Naive thymus-derived CD4-positive, alpha-beta T cell (primary cell): ENCODE measurements at regions of chr1 and their contacts with region 1.

Region 1: DNA sequence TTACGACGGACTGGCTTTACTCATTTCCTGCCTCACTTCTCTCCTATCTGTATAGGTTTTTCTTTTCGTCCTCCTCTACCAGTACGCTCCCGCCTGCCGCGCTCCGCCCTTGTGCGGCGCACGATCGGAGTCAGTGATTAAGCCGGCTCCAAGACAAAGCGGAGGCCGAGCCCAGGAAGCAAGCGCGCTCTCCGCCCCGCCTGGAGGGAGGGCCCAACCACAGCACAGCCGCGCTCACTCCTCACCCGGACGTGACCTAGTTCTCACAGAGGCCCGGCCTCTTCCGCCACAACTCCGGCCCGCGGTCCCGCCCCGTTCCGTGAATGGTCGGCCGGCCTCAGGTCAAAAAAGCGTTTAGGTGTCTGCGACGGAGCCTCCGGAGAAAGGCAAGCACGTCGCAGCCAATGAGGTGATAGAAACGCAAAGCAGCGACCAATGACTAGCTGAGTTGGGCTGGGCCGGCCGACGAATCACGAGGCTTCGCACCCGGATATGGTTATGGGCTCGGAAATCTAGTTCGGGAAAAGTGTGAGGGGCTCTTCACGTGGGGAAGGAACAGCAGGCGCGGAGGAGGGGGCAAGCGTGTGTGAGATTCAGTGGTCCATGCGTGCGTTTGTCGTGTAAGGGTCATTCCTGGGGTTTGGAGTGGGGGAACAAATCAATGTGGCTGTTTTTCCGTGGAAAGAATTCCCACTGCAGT is at the start of gene METTL13:
- DNase-seq: peak; percentile 89 to 100 (median 99)
- ATAC-seq: peak; percentile 95
- H3K4me3 ChIP-seq: peak within 1 kb of the TSS; percentile 95
- H3K4me3 Mint-ChIP-seq: peak within 1 kb of the TSS; percentile 90 to 99 (median 94)
- H3K27ac ChIP-seq: peak within 1 kb of the TSS; percentile 74
- H3K27ac Mint-ChIP-seq: peak within 1 kb of the TSS; percentile 93 to 99 (median 96)
- H3K4me1 ChIP-seq: peaks cover 20 to 41% of the 10 kb centered on the region in 2 donors
- H3K4me1 Mint-ChIP-seq: peaks cover 28 to 65% (median 58%) of the 10 kb centered on the region in 7 donors
- H3K27me3 ChIP-seq: no peaks in the 10 kb centered on the region
- H3K27me3 Mint-ChIP-seq: no peaks in the 10 kb centered on the region
- total RNA-seq, gene METTL13: 15.6 to 50.7 (median 34.5) TPM

Region 2: GRCh38 chr1:170074250-170075157 is 1706.8 kb before region 1 on chr1 and contains the start of gene KIFAP3:
- CTCF ChIA-PET with region 1: no interaction called
- POLR2A ChIA-PET with region 1: no interaction called
- intact Hi-C with region 1: loop called in 1 of 2 experiments (anchors 1 kb)
- DNase-seq: peak; percentile 84 to 94 (median 92)
- ATAC-seq: peak; percentile 96
- H3K4me3 ChIP-seq: peak within 1 kb of the TSS; percentile 76
- H3K4me3 Mint-ChIP-seq: peak within 1 kb of the TSS; percentile 89 to 99 (median 96)
- H3K27ac ChIP-seq: peak within 1 kb of the TSS; percentile 90
- H3K27ac Mint-ChIP-seq: peak within 1 kb of the TSS; percentile 83 to 98 (median 94)
- H3K4me1 ChIP-seq: peaks cover 15 to 37% of the 10 kb centered on the region in 2 donors
- H3K4me1 Mint-ChIP-seq: peaks cover 34 to 65% (median 57%) of the 10 kb centered on the region in 7 donors
- H3K27me3 ChIP-seq: no peaks in the 10 kb centered on the region
- H3K27me3 Mint-ChIP-seq: peaks cover 0 to 3% (median 0%) of the 10 kb centered on the region in 5 donors
- total RNA-seq, gene KIFAP3: 12.8 to 23.8 (median 20.1) TPM

Region 3: GRCh38 chr1:171654942-171655745 is 126.2 kb before region 1 on chr1:
- CTCF ChIA-PET with region 1: no interaction called
- POLR2A ChIA-PET with region 1: interaction called, 5 read pairs
- intact Hi-C with region 1: loop called (anchors 5 kb)
- DNase-seq: peak; percentile 24 to 76 (median 38)
- ATAC-seq: peak; percentile 78
- H3K4me3 ChIP-seq: peak overlapping the region; percentile 39
- H3K4me3 Mint-ChIP-seq: peak overlapping the region in 8 of 10 donors; percentile 3 to 72 (median 52)
- H3K27ac ChIP-seq: no peak overlapping the region
- H3K27ac Mint-ChIP-seq: peak overlapping the region in 1 of 9 donors; percentile 33
- H3K4me1 ChIP-seq: peaks cover 3 to 5% of the 10 kb centered on the region in 2 donors
- H3K4me1 Mint-ChIP-seq: peaks cover 9 to 12% (median 10%) of the 10 kb centered on the region in 7 donors
- H3K27me3 ChIP-seq: no peaks in the 10 kb centered on the region
- H3K27me3 Mint-ChIP-seq: peaks cover 0 to 34% (median 11%) of the 10 kb centered on the region in 5 donors

Region 4: DNA sequence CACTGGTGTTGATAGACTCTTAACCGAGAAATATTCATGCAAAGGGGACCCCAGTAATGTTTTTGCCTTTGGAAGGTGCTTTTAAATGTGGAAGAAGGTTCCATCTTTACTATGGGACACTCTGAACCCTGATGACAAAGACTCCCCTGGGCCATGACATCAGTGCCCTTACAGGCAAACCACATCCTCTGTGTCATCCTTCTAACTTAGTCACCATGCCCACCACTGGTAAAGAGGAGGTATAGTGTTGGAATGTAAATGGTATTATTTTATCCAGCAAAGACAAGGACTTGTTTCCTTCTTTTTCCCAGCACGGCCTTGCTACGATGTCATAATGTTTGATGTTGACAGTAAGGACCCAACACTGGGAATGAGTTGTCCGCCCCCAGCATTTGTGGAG is 12.8 kb after region 1 on chr1:
- CTCF ChIA-PET with region 1: no interaction called
- POLR2A ChIA-PET with region 1: interaction called, 4 read pairs
- intact Hi-C with region 1: loop called (anchors 1 to 2 kb)
- DNase-seq: peak in 2 of 9 donors; percentile 5 to 60
- ATAC-seq: peak; percentile 79
- H3K4me3 ChIP-seq: no peak overlapping the region
- H3K4me3 Mint-ChIP-seq: peak overlapping the region in 1 of 10 donors; percentile 59
- H3K27ac ChIP-seq: no peak overlapping the region
- H3K27ac Mint-ChIP-seq: peak overlapping the region in 6 of 9 donors; percentile 6 to 88 (median 17)
- H3K4me1 ChIP-seq: no peaks in the 10 kb centered on the region
- H3K4me1 Mint-ChIP-seq: peaks cover 4 to 36% (median 8%) of the 10 kb centered on the region in 7 donors
- H3K27me3 ChIP-seq: no peaks in the 10 kb centered on the region
- H3K27me3 Mint-ChIP-seq: no peaks in the 10 kb centered on the region

Region 5: GRCh38 chr1:172180501-172181285 is 399.4 kb after region 1 on chr1:
- CTCF ChIA-PET with region 1: no interaction called
- POLR2A ChIA-PET with region 1: no interaction called
- intact Hi-C with region 1: loop called (anchors 5 to 10 kb)
- DNase-seq: peak in 8 of 9 donors; percentile 18 to 50 (median 40)
- ATAC-seq: peak; percentile 72
- H3K4me3 ChIP-seq: peak overlapping the region; percentile 56
- H3K4me3 Mint-ChIP-seq: peak overlapping the region; percentile 61 to 91 (median 82)
- H3K27ac ChIP-seq: peak overlapping the region; percentile 80
- H3K27ac Mint-ChIP-seq: peak overlapping the region; percentile 95 to 99 (median 97)
- H3K4me1 ChIP-seq: peaks cover 21 to 23% of the 10 kb centered on the region in 2 donors
- H3K4me1 Mint-ChIP-seq: peaks cover 26 to 59% (median 45%) of the 10 kb centered on the region in 7 donors
- H3K27me3 ChIP-seq: no peaks in the 10 kb centered on the region
- H3K27me3 Mint-ChIP-seq: no peaks in the 10 kb centered on the region

Region 6: GRCh38 chr1:172443626-172444453 is 662.5 kb after region 1 on chr1 and contains the start of gene PIGC:
- CTCF ChIA-PET with region 1: no interaction called
- POLR2A ChIA-PET with region 1: no interaction called
- intact Hi-C with region 1: loop called (anchors 1 kb)
- DNase-seq: peak; percentile 78 to 89 (median 87)
- ATAC-seq: peak; percentile 100
- H3K4me3 ChIP-seq: peak within 1 kb of the TSS; percentile 72
- H3K4me3 Mint-ChIP-seq: peak within 1 kb of the TSS; percentile 87 to 98 (median 94)
- H3K27ac ChIP-seq: peak within 1 kb of the TSS; percentile 83
- H3K27ac Mint-ChIP-seq: peak within 1 kb of the TSS; percentile 91 to 97 (median 93)
- H3K4me1 ChIP-seq: peaks cover 15 to 25% of the 10 kb centered on the region in 2 donors
- H3K4me1 Mint-ChIP-seq: peaks cover 27 to 53% (median 47%) of the 10 kb centered on the region in 7 donors
- H3K27me3 ChIP-seq: no peaks in the 10 kb centered on the region
- H3K27me3 Mint-ChIP-seq: no peaks in the 10 kb centered on the region
- total RNA-seq, gene PIGC: 21.1 to 57.4 (median 25.1) TPM

Region 7: DNA sequence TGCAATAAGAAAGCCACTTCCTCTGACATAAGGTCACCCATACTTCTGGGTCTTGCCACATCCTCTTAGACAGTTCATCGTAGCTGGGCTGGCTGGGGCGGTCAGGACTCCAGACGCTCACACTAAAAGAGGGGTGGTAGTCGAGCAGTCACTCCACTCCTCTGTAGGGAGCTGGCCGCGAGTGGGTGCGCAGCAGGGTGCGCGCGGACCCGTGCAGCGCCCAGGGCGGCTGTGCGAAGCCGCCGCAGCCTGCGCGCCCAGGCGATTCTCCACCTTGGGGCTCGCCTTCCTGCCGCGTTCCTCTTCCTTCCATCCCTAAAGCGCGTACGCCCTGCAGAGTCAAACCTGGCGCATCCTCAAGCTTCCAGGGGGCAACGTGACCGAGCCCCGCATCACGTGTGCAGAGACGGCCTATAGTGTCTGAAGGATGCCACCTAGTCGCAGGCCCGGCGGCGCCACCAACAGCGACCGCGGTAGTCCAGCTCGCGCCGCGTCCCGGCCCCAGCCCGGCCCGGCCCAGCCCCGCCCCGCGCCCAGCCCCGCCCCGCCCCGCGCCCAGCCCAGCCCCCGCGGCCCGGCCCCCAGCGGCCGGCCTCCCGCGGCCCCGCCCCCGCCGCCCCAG is 1695.4 kb after region 1 on chr1:
- CTCF ChIA-PET with region 1: no interaction called
- POLR2A ChIA-PET with region 1: no interaction called
- intact Hi-C with region 1: loop called in 1 of 2 experiments (anchors 2 kb)
- DNase-seq: peak; percentile 65 to 82 (median 78)
- ATAC-seq: peak; percentile 87
- H3K4me3 ChIP-seq: peak overlapping the region; percentile 92
- H3K4me3 Mint-ChIP-seq: peak overlapping the region; percentile 82 to 94 (median 91)
- H3K27ac ChIP-seq: peak overlapping the region; percentile 78
- H3K27ac Mint-ChIP-seq: peak overlapping the region; percentile 61 to 96 (median 89)
- H3K4me1 ChIP-seq: peaks cover 20 to 31% of the 10 kb centered on the region in 2 donors
- H3K4me1 Mint-ChIP-seq: peaks cover 38 to 72% (median 63%) of the 10 kb centered on the region in 7 donors
- H3K27me3 ChIP-seq: no peaks in the 10 kb centered on the region
- H3K27me3 Mint-ChIP-seq: no peaks in the 10 kb centered on the region